ENCODE measurements at regions of chr5 and their contacts with region 1.

Region 1: GRCh38 chr5:123371575-123372179 is 51.5 kb downstream of the CEP120 start:
- DNase-seq: peak; percentile 70 to 91
- ATAC-seq: no peak
- H3K4me3 ChIP-seq: no peak overlapping the region
- H3K27ac ChIP-seq: no peak overlapping the region
- H3K4me1 ChIP-seq: no peaks in the 10 kb centered on the region
- H3K27me3 ChIP-seq: no peaks in the 10 kb centered on the region

Region 2: DNA sequence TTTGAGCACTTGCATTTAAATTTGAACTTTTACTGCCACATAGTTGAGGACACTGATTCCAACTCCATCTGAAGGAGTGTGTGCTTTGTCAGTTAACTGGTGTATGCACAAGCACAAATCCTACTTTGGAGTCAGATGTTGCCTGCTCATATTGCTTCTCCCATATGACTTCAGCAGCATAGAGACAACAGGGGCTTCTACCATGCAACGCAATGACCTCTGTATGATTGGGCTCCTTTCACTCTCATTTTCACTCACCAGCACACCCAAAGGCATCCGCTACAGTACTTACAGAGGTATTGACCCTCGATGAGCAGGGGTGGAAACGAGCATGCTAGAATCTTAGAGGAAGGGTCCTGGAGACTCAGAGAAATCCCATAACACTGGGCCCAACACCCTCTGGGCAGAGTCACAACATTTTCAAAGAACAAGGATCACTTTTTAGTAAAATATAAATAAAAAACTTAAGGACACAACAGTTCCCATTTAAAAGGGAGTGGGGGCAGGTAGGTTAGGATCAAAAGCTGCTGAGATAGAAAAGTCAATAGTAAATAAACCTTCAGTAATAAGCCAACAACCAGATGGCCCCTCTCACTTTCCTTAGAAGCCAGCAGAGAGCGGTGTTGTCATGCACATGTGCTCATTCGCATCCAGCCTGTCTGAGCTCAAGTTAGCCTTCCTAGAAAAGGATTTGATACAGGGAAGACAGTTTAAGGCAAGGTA is 855.8 kb before region 1 on chr5:
- intact Hi-C with region 1: loop called (anchors 5 kb)
- DNase-seq: peak in 1 of 2 donors; percentile 62
- ATAC-seq: peak; percentile 82
- H3K4me3 ChIP-seq: no peak overlapping the region
- H3K27ac ChIP-seq: no peak overlapping the region
- H3K4me1 ChIP-seq: no peaks in the 10 kb centered on the region
- H3K27me3 ChIP-seq: no peaks in the 10 kb centered on the region

Region 3: GRCh38 chr5:122845229-122846050 is 526.2 kb before region 1 on chr5 and contains the start of gene SNX24:
- intact Hi-C with region 1: loop called in 1 of 2 experiments (anchors 5 kb)
- DNase-seq: peak; percentile 91 to 93
- ATAC-seq: peak; percentile 90
- H3K4me3 ChIP-seq: peak within 1 kb of the TSS; percentile 67 to 93
- H3K27ac ChIP-seq: peak within 1 kb of the TSS; percentile 53 to 64
- H3K4me1 ChIP-seq: no peaks in the 10 kb centered on the region
- H3K27me3 ChIP-seq: no peaks in the 10 kb centered on the region
- total RNA-seq, gene SNX24: 20.6 to 21.0 TPM

Region 4: DNA sequence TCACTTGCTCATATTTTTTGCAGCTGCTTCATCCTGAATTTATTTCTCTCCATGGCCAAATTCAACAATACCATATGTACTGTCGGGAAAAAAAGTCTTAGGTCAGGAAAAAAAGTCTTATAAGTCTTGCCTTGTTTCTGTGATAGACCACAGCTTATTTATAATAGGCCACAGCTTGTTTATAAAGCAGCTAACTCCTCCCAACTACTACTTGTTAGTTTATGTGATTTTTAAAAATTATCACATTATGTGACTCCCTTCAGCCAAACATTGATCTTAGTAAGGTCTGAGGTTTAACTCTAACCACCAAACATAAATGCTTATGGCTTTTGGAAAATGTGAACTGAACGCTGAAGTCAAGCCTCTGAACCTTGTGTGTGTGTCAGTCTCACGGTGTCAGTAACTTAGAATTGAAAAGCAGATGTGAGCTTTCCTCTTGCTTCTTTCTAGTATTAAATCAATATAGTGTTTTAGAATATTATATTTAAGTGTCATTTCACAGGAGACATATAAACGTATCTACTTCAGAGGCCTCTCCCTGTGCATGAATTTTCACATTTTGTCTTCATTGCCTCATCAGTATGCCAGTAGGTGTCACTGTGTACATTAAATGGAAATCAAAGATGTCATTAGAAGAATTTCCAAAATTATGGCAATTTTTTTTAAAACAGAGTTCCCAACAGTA is 474.9 kb before region 1 on chr5:
- intact Hi-C with region 1: loop called (anchors 2 to 5 kb)
- DNase-seq: no peak
- ATAC-seq: no peak
- H3K4me3 ChIP-seq: no peak overlapping the region
- H3K27ac ChIP-seq: no peak overlapping the region
- H3K4me1 ChIP-seq: no peaks in the 10 kb centered on the region
- H3K27me3 ChIP-seq: no peaks in the 10 kb centered on the region

Region 5: DNA sequence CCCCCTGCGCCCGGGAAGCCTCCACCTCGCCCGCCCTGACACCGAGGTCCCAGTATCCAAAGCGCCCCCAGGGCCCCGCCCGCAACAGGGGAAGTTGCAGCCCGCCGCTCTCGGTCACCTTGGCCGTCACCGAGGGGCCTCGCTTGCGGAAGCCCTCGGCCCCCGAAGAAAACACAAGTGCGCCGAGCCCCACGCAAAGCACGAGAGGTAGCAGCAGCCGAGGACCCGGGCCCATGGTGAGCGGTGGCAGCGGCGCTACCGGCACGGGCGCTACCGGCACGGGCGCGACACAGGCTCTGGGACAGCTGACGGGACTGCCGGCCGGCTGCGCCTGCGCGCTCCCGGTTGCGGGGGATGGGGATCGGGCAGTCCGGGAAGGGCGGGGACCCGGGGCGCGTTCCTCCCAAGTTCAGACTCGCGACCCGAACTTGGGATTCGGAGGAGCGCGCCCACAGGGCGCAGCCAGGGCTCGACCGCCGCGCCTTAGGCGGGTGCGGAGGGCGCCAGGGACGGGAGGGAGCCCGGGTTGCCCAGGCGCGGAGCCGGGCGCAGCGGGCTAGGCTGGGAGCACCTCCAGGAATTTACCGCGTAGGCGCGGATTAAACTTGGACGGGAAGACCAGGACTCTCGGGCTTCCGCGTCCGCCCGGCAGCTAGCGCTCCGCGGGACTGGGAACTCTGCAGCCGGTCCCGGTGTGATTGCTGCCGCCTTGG is 335.1 kb before region 1 on chr5 and contains the start of gene PPIC:
- intact Hi-C with region 1: loop called (anchors 5 kb)
- DNase-seq: peak; percentile 92 to 97
- ATAC-seq: peak; percentile 96
- H3K4me3 ChIP-seq: peak within 1 kb of the TSS; percentile 70 to 92
- H3K27ac ChIP-seq: peak within 1 kb of the TSS; percentile 82 to 88
- H3K4me1 ChIP-seq: no peaks in the 10 kb centered on the region
- H3K27me3 ChIP-seq: no peaks in the 10 kb centered on the region
- total RNA-seq, gene PPIC: 52.5 to 71.1 TPM